ENCODE measurements at regions of chr6 and their contacts with region 1.

Region 1: GRCh38 chr6:122491919-122492555 is 20.4 kb upstream of the SERINC1 start:
- DNase-seq: peak; percentile 19
- H3K4me3 ChIP-seq: no peak overlapping the region
- CTCF ChIP-seq: peak; percentile 87

Region 2: GRCh38 chr6:122471107-122472021 is 20.7 kb before region 1 on chr6 and contains the start of gene SERINC1:
- CTCF ChIA-PET with region 1: interaction called, 13 read pairs
- POLR2A ChIA-PET with region 1: no interaction called
- DNase-seq: peak; percentile 61
- H3K4me3 ChIP-seq: peak within 1 kb of the TSS; percentile 97
- CTCF ChIP-seq: no peak

Region 3: GRCh38 chr6:122511193-122511924 is 19.3 kb after region 1 on chr6:
- CTCF ChIA-PET with region 1: interaction called, 14 read pairs
- POLR2A ChIA-PET with region 1: no interaction called
- DNase-seq: no peak
- H3K4me3 ChIP-seq: no peak overlapping the region
- CTCF ChIP-seq: no peak

Region 4: DNA sequence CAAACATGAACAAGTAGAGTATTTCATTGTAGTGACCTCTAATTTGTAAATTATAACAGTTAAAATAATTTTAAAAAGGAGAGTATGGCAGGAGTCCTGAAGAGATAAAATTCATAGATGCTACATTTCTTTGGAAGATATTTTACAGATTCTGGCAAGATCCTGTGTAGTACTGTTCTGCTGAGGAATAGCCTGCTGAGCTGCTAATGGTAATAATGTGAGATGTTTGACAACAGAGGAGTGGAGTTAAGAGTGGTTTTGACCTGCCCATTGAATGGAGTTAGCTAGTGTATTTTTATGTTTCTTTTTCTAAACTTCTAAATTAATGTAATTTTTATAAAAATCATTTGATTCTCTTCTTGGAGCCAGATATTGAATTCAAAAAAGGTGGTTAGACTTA is 515.8 kb after region 1 on chr6:
- CTCF ChIA-PET with region 1: no interaction called
- POLR2A ChIA-PET with region 1: no interaction called
- DNase-seq: no peak
- H3K4me3 ChIP-seq: no peak overlapping the region
- CTCF ChIP-seq: no peak